Activated T-helper 2 cell treated with anti-CD3 and anti-CD28 coated beads, Interferon-gamma antibody, Interleukin-2, Interleukin-4, amounts not matched to agents 10 μg/mL and 5 μg/mL and 100 μg/mL, durations not matched to agents 14 hours and 24 hours and 36 hours (primary cell): ENCODE measurements at regions of chr7 and their contacts with region 1.

Region 1: GRCh38 chr7:148584154-148584827 is 6.3 kb upstream of the C7orf33 start:
- DNase-seq: no peak
- H3K4me3 Mint-ChIP-seq: peak overlapping the region; percentile 38
- H3K27ac Mint-ChIP-seq: no peak overlapping the region
- H3K4me1 Mint-ChIP-seq: peaks cover 33% of the 10 kb centered on the region
- H3K27me3 Mint-ChIP-seq: peaks cover 16% of the 10 kb centered on the region

Region 2: DNA sequence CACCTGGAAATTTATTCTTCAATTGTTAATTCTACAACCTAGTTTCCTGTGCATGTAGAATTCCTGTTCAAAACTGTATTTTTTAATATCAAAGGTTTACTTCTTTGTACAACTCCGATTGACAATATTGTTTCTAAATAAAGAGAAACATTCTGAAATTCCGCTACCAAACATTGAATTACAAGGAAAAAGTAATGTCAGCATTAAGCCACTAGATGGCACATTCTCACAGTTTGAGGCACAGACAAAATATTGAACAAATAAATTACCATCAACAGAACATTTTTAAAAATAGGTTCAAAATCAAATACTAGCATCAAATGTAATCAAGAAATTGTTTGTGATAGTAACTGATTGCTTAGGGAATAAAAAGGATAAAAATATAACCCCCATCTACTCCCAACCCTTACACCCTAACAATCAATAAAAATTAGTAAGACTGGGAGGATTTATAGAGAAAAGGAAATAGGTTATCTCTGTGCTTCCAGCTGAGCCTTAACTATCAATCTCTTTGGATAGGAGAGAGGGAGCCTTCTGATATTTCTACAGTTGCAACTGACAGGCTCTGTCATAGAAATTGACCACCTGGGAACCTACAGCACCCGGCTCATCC is 80.3 kb before region 1 on chr7:
- intact Hi-C with region 1: loop called (anchors 1 kb)
- DNase-seq: no peak
- H3K4me3 Mint-ChIP-seq: no peak overlapping the region
- H3K27ac Mint-ChIP-seq: no peak overlapping the region
- H3K4me1 Mint-ChIP-seq: peaks cover 23% of the 10 kb centered on the region
- H3K27me3 Mint-ChIP-seq: peaks cover 32% of the 10 kb centered on the region

Region 3: GRCh38 chr7:148563583-148564274 is 20.6 kb before region 1 on chr7:
- intact Hi-C with region 1: loop called (anchors 1 kb)
- DNase-seq: no peak
- H3K4me3 Mint-ChIP-seq: peak overlapping the region; percentile 44
- H3K27ac Mint-ChIP-seq: peak overlapping the region; percentile 75
- H3K4me1 Mint-ChIP-seq: peaks cover 16% of the 10 kb centered on the region
- H3K27me3 Mint-ChIP-seq: peaks cover 21% of the 10 kb centered on the region

Region 4: DNA sequence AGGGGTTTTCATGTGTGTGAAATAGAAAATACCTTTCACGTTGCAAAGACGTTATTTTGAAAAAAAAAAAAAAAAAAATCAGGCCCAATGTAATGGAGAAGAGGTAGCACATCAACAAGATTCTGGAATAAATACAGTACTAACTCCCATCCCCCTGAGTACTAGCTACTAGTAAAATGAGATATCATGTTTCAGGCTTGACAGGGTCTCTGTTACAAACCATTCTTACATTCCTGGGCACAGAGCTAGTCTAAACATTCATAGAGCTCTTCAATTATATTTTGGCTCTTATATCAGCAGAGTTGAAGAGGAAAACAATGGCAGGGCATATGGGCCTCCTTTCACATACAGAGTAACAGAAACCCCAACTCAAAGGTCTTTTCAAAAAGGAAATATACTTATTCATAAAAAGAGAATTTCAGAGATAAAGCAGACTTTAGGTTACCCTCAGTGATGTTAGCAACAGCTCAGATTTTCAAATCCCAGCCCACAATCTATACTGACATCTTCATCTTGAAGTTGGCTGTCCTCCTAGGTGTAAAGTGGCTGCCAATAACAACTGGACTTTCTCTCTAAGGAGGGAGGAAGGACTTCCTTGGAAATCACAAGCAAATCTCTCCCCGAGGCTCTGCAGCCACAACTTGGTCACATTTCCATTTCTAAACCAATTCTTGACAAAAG is 24.9 kb after region 1 on chr7:
- intact Hi-C with region 1: loop called (anchors 2 kb)
- DNase-seq: no peak
- H3K4me3 Mint-ChIP-seq: no peak overlapping the region
- H3K27ac Mint-ChIP-seq: no peak overlapping the region
- H3K4me1 Mint-ChIP-seq: peaks cover 21% of the 10 kb centered on the region
- H3K27me3 Mint-ChIP-seq: peaks cover 26% of the 10 kb centered on the region

Region 5: GRCh38 chr7:148624735-148625134 is 40.4 kb after region 1 on chr7:
- intact Hi-C with region 1: loop called (anchors 5 kb)
- DNase-seq: no peak
- H3K4me3 Mint-ChIP-seq: no peak overlapping the region
- H3K27ac Mint-ChIP-seq: no peak overlapping the region
- H3K4me1 Mint-ChIP-seq: peaks cover 46% of the 10 kb centered on the region
- H3K27me3 Mint-ChIP-seq: peaks cover 5% of the 10 kb centered on the region

Region 6: GRCh38 chr7:148809856-148810255 is 225.6 kb after region 1 on chr7:
- intact Hi-C with region 1: no loop called
- DNase-seq: no peak
- H3K4me3 Mint-ChIP-seq: no peak overlapping the region
- H3K27ac Mint-ChIP-seq: peak overlapping the region; percentile 15
- H3K4me1 Mint-ChIP-seq: peaks cover 3% of the 10 kb centered on the region
- H3K27me3 Mint-ChIP-seq: no peaks in the 10 kb centered on the region